AG04450 (cell line): ENCODE measurements at regions of chr4 and their contacts with region 1.

Region 1: GRCh38 chr4:22483551-22483981 is 32.3 kb downstream of the ADGRA3 start:
- DNase-seq: peak; percentile 70
- H3K4me3 ChIP-seq: no peak overlapping the region
- H3K27ac ChIP-seq: no peak overlapping the region
- H3K27me3 ChIP-seq: no peaks in the 10 kb centered on the region
- CTCF ChIP-seq: no peak

Region 2: DNA sequence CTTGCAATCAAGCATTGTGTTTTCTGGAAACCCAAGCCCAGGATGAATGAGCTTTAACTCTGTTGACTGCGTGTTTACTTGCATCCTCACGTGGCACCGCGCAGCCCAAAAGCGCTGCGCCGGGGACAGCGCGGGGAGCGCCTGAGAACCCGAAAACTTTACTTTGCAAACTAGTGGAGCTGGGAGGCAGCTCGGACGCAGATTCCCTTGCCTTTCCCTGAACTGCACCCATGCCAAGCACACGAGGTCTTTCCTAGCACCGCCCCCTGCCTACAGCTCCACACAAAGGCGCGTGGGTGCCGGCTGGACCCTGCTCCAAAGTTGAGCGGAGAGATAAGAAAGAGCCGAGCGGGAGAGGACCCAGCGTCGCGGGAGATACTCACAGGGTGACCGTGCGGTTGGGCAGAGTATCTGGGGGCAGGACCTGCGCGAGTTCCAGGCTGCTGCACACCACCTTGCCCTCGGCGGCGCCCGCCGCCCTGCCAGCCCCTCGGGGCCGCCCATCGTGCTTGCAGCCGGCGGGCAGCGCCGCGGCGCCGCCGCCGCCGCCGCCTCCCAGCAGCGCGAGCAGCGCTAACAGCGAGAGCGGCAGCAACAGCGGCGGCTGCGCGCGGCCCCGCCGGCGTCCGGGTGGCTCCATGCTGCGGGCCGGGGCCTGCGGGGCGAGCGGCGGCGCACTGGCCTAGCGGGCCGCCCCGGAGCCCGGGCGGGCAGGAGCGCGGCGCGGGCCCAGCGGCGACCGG is 31.8 kb after region 1 on chr4:
- CTCF ChIA-PET with region 1: no interaction called
- POLR2A ChIA-PET with region 1: interaction called, 11 read pairs
- DNase-seq: no peak
- H3K4me3 ChIP-seq: peak overlapping the region; percentile 80
- H3K27ac ChIP-seq: peak overlapping the region; percentile 65
- H3K27me3 ChIP-seq: no peaks in the 10 kb centered on the region
- CTCF ChIP-seq: peak; percentile 16; the same call in 1 of the 2 replicates